ENCODE measurements at regions of chr1 and their contacts with region 1.

Region 1: DNA sequence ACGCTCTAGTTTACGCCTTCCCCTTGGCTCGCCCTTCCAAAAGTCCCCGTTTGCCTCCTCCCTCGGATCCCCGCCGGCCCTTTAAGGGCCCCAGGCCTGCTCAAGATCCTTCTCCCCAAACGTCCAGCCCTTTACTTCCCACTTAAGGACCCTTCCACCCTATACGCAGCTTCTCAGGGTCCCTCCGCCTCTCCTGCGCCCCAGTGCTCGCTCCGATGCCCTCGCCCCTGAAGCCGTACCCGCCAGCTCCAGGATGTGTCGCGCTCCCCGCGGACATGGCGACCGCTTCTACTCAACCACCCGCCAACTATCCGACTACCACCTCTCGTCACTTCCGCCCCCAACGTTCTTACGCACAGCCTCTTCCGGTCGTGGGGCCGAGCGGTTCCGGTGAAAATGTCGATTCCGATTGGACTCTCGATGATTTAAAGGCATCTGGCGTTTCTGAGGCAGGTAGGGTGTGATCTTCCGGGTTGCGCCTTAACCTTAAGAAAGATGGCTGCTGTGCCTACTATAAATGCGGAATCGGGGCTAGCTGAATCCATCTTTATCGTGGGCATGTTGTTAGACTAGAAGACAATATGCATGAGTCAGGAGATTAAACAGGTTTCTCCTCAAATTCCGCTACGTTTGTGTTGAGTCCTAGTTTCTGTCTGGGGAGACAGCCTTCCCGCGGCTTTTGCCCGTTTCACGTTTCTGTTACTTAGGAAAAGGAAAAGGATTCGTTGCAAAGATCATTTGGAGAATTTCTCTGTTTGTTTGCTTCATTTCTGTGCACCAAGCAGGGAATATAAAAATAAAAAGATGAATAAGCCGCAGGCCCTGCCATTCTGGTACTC is at the start of gene KHDC4:
- DNase-seq: peak; percentile 86
- H3K4me3 ChIP-seq: peak within 1 kb of the TSS; percentile 90
- CTCF ChIP-seq: peak; percentile 11

Region 2: DNA sequence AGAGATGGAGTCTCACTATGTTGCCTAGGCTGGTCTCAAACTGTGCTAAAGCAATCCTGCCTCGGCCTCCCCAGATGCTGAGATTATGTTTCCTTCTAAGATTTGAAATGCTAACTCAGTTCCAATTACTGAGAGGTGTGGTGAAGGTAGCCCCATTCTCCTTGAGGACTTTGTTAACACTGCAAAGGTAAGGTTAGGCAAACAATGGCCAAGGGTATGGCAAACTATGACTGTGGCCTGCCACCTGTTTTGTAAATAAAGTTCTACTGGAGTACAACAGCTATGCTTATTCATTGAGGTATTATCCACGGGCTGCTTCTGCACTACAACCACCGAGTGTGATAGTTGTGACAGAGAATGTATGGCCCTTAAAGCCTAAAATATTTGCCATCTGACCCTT is 13.6 kb before region 1 on chr1:
- CTCF ChIA-PET with region 1: interaction called, 17 read pairs
- POLR2A ChIA-PET with region 1: interaction called, 4 read pairs
- DNase-seq: no peak
- H3K4me3 ChIP-seq: no peak overlapping the region
- CTCF ChIP-seq: no peak

Region 3: GRCh38 chr1:155946633-155947219 is 12.4 kb after region 1 on chr1:
- CTCF ChIA-PET with region 1: interaction called, 13 read pairs
- POLR2A ChIA-PET with region 1: interaction called, 5 read pairs
- DNase-seq: no peak
- H3K4me3 ChIP-seq: no peak overlapping the region
- CTCF ChIP-seq: no peak

Region 4: DNA sequence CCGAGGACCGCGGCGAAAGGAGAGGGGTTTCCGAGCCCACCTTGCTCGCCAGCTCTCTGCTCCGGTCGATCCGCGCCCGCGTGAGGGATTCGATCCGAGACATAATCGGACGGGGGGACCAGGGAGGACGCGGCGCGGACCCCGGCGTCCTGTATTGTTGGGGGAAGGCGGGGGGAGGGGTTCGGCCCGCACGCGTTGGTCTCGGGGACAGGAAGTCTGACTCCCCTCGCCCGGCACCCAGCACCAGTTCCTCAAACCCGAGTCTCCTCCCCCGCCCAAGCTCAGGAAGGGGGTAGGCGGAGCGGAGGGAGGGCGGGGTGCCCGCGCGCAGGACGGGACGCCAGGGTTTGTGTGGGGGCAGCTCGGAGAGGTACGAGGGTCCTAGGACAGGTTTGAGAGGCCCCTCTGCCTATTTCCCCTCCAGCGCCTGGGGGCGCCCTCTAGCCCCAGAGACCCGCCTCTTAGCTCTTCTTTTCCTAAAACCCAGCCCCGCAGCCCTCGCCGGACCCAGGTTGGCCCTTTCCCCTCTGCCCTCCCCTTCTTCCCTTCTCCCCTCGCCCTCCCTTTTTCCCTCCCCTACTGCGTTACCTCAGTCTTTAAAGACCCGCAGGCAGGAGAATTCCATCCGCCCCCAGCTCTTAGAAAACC is 44.1 kb after region 1 on chr1 and contains the start of gene ARHGEF2:
- CTCF ChIA-PET with region 1: interaction called, 45 read pairs
- POLR2A ChIA-PET with region 1: interaction called, 6 read pairs
- DNase-seq: no peak
- H3K4me3 ChIP-seq: peak within 1 kb of the TSS; percentile 88
- CTCF ChIP-seq: peak; percentile 30

Region 5: GRCh38 chr1:156062189-156062588 is 127.9 kb after region 1 on chr1:
- CTCF ChIA-PET with region 1: interaction called, 29 read pairs
- POLR2A ChIA-PET with region 1: no interaction called
- DNase-seq: no peak
- H3K4me3 ChIP-seq: no peak overlapping the region
- CTCF ChIP-seq: no peak

Measured in AG04449 (cell line).